Activated naive CD4-positive, alpha-beta T cell treated with anti-CD3 and anti-CD28 coated beads, Interleukin-2, amount 10 ng/mL, durations not matched to agents 7 days and 5 days (primary cell): ENCODE measurements at regions of chr12 and their contacts with region 1.

Region 1: DNA sequence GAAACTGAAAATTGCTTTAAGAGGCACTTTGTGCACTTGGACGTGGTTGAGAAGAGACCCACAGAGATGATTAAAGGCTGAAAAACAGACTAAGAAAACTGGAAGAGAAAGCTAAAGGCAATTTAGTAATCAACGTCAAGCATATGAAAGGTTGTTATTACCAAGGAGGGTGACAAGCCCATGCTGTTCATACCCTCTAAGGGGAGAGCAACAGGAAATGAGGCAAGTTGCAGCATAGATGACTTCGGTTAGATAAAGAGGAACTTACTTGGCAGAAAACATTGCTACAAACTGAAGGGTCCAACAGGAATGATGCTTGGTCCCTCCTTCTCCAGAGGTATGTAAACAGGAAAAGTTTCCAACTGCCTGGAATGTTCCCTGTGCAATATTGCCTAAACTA is 107.8 kb downstream of the DUSP6 start:
- DNase-seq: peak; percentile 37
- H3K4me3 Mint-ChIP-seq: peak overlapping the region; percentile 46
- H3K27ac Mint-ChIP-seq: peak overlapping the region; percentile 91
- H3K4me1 Mint-ChIP-seq: peaks cover 59% of the 10 kb centered on the region
- H3K27me3 Mint-ChIP-seq: no peaks in the 10 kb centered on the region

Region 2: GRCh38 chr12:89040146-89040964 is 204.2 kb before region 1 on chr12:
- CTCF ChIA-PET with region 1: no interaction called
- DNase-seq: peak; percentile 92
- H3K4me3 Mint-ChIP-seq: peak overlapping the region; percentile 10
- H3K27ac Mint-ChIP-seq: peak overlapping the region; percentile 91
- H3K4me1 Mint-ChIP-seq: peaks cover 59% of the 10 kb centered on the region
- H3K27me3 Mint-ChIP-seq: peaks cover 4% of the 10 kb centered on the region

Region 3: DNA sequence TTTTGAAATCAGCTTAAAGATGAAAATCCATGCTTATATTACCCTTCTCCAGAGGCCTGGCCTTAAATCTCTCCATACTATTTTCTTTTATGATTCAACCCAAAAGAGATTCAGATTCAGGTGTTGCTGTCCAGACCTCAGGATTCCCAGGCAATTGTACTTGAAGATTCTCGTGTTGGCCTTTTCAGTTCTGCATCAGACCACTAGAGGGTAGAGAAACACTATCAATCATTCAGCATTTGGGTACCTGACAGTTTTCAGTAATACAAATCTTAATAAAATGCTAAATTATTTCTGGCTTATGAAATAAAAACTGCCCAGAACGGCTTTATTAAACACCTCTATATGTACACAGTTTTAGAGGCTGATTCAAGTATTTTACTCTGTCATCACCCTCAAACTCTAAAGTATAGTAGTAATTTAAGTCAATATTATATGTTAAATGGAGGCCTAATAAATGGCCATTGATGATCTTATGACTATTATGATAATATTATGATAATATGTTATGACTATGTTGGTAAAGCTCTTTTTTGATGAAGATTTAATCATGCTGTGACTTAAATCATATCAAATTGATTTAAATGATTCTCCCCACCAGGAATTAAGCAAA is 193.4 kb before region 1 on chr12:
- CTCF ChIA-PET with region 1: interaction called, 13 read pairs
- DNase-seq: peak; percentile 24
- H3K4me3 Mint-ChIP-seq: no peak overlapping the region
- H3K27ac Mint-ChIP-seq: no peak overlapping the region
- H3K4me1 Mint-ChIP-seq: peaks cover 22% of the 10 kb centered on the region
- H3K27me3 Mint-ChIP-seq: no peaks in the 10 kb centered on the region

Region 4: GRCh38 chr12:89162704-89163261 is 81.8 kb before region 1 on chr12:
- CTCF ChIA-PET with region 1: interaction called, 10 read pairs
- DNase-seq: peak; percentile 50
- H3K4me3 Mint-ChIP-seq: no peak overlapping the region
- H3K27ac Mint-ChIP-seq: no peak overlapping the region
- H3K4me1 Mint-ChIP-seq: peaks cover 18% of the 10 kb centered on the region
- H3K27me3 Mint-ChIP-seq: no peaks in the 10 kb centered on the region

Region 5: GRCh38 chr12:89225808-89226411 is 18.6 kb before region 1 on chr12:
- CTCF ChIA-PET with region 1: interaction called, 12 read pairs
- DNase-seq: no peak
- H3K4me3 Mint-ChIP-seq: peak overlapping the region; percentile 43
- H3K27ac Mint-ChIP-seq: peak overlapping the region; percentile 94
- H3K4me1 Mint-ChIP-seq: peaks cover 70% of the 10 kb centered on the region
- H3K27me3 Mint-ChIP-seq: peaks cover 4% of the 10 kb centered on the region

Region 6: GRCh38 chr12:89352492-89353187 is 108.1 kb after region 1 on chr12 and contains the start of gene DUSP6:
- CTCF ChIA-PET with region 1: interaction called, 32 read pairs
- DNase-seq: peak; percentile 98
- H3K4me3 Mint-ChIP-seq: peak within 1 kb of the TSS; percentile 99
- H3K27ac Mint-ChIP-seq: peak within 1 kb of the TSS; percentile 97
- H3K4me1 Mint-ChIP-seq: peaks cover 56% of the 10 kb centered on the region
- H3K27me3 Mint-ChIP-seq: peaks cover 7% of the 10 kb centered on the region